AG04450 (cell line): ENCODE measurements at regions of chr17 and their contacts with region 1.

Region 1: GRCh38 chr17:67800495-67800928 is 24.8 kb upstream of the BPTF start:
- DNase-seq: peak; percentile 26
- H3K4me3 ChIP-seq: no peak overlapping the region
- H3K27ac ChIP-seq: no peak overlapping the region
- H3K27me3 ChIP-seq: peaks cover 6% of the 10 kb centered on the region
- CTCF ChIP-seq: peak; percentile 70

Region 2: GRCh38 chr17:67818110-67819002 is 17.8 kb after region 1 on chr17:
- CTCF ChIA-PET with region 1: interaction called, 10 read pairs
- POLR2A ChIA-PET with region 1: no interaction called
- DNase-seq: no peak
- H3K4me3 ChIP-seq: no peak overlapping the region
- H3K27ac ChIP-seq: no peak overlapping the region
- H3K27me3 ChIP-seq: no peaks in the 10 kb centered on the region
- CTCF ChIP-seq: no peak

Region 3: DNA sequence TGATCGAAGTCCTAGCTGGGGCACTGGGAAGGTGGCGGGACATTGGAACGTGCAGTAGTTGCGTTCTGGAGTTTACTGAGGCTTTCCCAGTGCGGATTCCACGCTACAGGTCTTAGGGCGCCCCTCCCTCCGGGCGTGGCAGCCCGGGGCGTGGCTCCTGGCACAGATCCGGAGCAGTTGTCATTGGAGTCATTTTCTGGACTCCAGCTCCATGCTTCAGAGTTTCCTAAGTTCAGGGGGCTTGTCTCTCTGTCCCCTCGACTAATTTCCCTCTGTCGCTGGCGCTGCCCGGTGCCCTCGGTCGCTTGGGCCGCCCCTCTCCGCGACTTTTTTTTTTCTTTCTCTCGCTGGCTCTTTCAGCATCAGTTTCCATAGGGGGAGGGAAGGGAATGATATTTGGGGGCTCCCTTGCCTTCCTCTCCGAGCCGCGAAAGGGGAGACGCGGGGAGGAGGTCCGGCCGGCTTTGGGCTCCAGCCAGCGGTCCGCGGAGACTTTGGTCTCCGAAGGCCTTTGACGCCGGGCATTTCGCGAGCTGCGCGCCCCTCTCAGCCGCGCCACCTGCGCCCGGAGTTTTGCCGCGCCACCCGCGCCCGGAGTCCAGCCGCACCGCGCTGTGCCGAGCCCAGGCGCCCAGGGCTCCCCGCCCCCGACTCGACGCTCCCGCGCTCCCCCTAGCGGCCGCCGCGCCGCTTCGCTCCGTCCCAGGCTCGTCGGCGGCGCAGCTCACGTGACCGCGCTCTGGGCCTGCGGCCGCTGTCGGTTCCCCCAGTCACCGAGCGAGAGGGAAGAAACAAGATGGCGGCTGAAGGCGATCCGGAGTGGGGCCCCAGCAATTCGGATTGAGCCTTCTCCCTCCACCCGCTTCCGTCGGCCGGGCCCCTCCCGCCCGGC is 24.5 kb after region 1 on chr17 and contains the start of gene BPTF:
- CTCF ChIA-PET with region 1: interaction called, 15 read pairs
- POLR2A ChIA-PET with region 1: no interaction called
- DNase-seq: peak; percentile 70
- H3K4me3 ChIP-seq: peak within 1 kb of the TSS; percentile 93
- H3K27ac ChIP-seq: no peak within 1 kb of the TSS
- H3K27me3 ChIP-seq: no peaks in the 10 kb centered on the region
- CTCF ChIP-seq: peak; percentile 67
- polyA plus RNA-seq, gene BPTF: 34.9 and 46.0 TPM in 2 replicates